PC-3 (cell line): ENCODE measurements at regions of chr6 and their contacts with region 1.

Region 1: GRCh38 chr6:21754891-21755290 is 161.3 kb downstream of the SOX4 start:
- DNase-seq: peak; percentile 89
- ATAC-seq: peak; percentile 68
- H3K4me3 ChIP-seq: no peak overlapping the region
- H3K27ac ChIP-seq: peak overlapping the region; percentile 40
- H3K4me1 ChIP-seq: peaks cover 44% of the 10 kb centered on the region
- H3K27me3 ChIP-seq: no peaks in the 10 kb centered on the region
- CTCF ChIP-seq: no peak

Region 2: GRCh38 chr6:21240709-21241108 is 514.2 kb before region 1 on chr6:
- CTCF ChIA-PET with region 1: no interaction called
- POLR2A ChIA-PET with region 1: no interaction called
- intact Hi-C with region 1: no loop called
- DNase-seq: no peak
- ATAC-seq: no peak
- H3K4me3 ChIP-seq: no peak overlapping the region
- H3K27ac ChIP-seq: no peak overlapping the region
- H3K4me1 ChIP-seq: no peaks in the 10 kb centered on the region
- H3K27me3 ChIP-seq: no peaks in the 10 kb centered on the region
- CTCF ChIP-seq: no peak

Region 3: GRCh38 chr6:21634582-21634981 is 120.3 kb before region 1 on chr6:
- CTCF ChIA-PET with region 1: no interaction called
- POLR2A ChIA-PET with region 1: interaction called, 6 read pairs
- intact Hi-C with region 1: loop called (anchors 5 kb)
- DNase-seq: peak; percentile 93
- ATAC-seq: peak; percentile 97
- H3K4me3 ChIP-seq: no peak overlapping the region
- H3K27ac ChIP-seq: peak overlapping the region; percentile 91
- H3K4me1 ChIP-seq: peaks cover 17% of the 10 kb centered on the region
- H3K27me3 ChIP-seq: no peaks in the 10 kb centered on the region
- CTCF ChIP-seq: no peak

Region 4: DNA sequence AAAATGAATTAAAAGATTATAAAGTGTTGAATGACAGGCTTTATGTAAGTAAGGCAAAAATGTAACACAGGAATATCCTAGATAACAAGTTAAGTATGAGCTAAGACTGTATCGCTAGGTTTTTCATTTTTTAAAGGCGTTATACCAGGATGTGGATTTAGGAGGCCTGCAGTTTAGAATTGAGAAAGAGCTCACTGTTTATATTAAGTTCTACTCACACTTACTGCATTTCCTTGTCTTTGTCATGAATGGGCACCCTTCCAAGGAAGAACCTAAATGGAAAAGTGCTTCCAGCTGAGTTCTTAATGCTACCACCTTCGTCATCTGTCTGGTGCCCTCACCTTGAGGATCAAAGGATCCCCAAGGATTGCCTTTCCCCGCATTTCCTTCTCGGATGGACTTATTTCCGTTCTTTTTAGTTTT is 12.6 kb before region 1 on chr6:
- CTCF ChIA-PET with region 1: no interaction called
- POLR2A ChIA-PET with region 1: interaction called, 10 read pairs
- intact Hi-C with region 1: no loop called
- DNase-seq: peak; percentile 91
- ATAC-seq: peak; percentile 71
- H3K4me3 ChIP-seq: peak overlapping the region; percentile 33
- H3K27ac ChIP-seq: peak overlapping the region; percentile 52
- H3K4me1 ChIP-seq: peaks cover 55% of the 10 kb centered on the region
- H3K27me3 ChIP-seq: no peaks in the 10 kb centered on the region
- CTCF ChIP-seq: no peak

Region 5: DNA sequence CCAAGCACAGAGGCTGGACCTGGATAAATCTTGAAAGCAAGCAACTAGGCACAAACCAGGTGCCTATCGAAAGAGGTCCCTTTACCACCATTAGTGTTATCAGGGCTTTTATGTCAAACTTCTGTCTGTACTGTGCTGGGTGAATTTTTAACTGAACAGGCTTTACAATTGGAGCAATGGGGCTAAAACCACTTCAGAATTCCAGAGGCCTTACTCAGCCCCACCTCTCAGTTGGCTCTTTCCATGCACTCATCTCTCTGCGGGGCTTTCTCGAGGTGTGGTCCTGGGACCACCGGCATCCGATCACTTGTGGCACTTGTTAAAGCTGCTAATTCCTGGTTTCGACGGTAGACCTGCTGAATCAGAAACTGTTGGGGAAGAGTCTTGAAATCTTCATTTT is 71.1 kb after region 1 on chr6:
- CTCF ChIA-PET with region 1: no interaction called
- POLR2A ChIA-PET with region 1: no interaction called
- intact Hi-C with region 1: loop called (anchors 5 kb)
- DNase-seq: peak; percentile 62
- ATAC-seq: peak; percentile 40
- H3K4me3 ChIP-seq: no peak overlapping the region
- H3K27ac ChIP-seq: no peak overlapping the region
- H3K4me1 ChIP-seq: peaks cover 33% of the 10 kb centered on the region
- H3K27me3 ChIP-seq: no peaks in the 10 kb centered on the region
- CTCF ChIP-seq: no peak

Region 6: DNA sequence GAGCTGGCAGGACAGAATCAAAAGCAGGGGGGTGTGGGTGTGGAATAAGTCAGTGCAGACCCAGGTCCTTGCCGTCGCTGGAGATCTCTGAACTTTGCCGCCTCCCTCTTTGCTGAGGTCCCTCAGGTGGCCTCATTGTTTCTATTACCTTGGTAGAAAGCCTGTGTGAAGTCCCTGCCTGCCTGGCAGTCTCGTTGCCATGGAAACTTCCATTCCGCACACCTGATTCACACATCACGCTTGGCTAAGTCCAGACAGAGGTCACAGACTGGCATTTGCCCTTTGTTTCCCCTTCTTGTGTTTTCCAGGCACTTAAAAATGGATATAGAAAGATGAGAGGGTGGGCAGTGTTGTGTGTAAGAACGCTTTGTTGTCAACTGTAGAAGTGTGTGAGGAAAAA is 281.4 kb after region 1 on chr6:
- CTCF ChIA-PET with region 1: no interaction called
- POLR2A ChIA-PET with region 1: no interaction called
- intact Hi-C with region 1: no loop called
- DNase-seq: peak; percentile 72
- ATAC-seq: peak; percentile 84
- H3K4me3 ChIP-seq: no peak overlapping the region
- H3K27ac ChIP-seq: no peak overlapping the region
- H3K4me1 ChIP-seq: peaks cover 10% of the 10 kb centered on the region
- H3K27me3 ChIP-seq: no peaks in the 10 kb centered on the region
- CTCF ChIP-seq: no peak